ENCODE measurements at regions of chr2 and their contacts with region 1.

Region 1: DNA sequence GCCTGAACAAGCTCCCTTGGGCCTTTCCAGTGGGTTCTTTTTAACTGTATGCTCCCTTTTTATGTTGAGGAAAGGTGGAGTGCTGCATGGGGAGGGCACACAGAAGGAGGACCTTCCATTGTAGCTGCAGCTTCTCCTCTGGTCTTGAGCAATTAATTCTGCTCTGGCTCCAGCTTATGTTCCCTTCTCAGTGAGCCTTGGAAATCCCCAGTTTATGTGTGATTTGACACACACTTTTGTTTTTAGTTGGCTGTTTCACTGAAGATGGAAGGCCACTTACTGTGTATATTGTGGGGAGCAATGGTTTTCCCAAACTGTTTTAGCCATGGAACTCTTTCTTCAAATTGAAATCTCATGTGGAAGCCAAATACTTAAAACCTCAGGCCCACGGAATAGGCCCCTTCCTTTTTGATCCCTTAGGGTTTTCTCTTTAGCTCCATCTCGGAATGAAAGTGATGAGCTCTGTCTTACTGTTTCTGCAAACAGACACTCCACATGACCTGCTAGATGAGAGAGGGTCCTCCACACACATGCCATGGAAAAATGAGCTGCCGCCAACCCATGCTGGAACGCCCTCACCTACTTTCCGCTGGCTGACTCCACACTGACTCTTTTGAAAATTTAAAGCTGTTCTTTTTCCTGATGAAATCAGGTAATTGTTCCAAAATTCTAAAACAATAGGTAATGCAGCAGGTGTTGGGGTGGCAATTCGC is 280.9 kb upstream of the SIX2 start:
- DNase-seq: peak; percentile 40
- ATAC-seq: peak; percentile 91
- H3K4me3 ChIP-seq: no peak overlapping the region
- H3K27ac ChIP-seq: peak overlapping the region; percentile 27
- H3K4me1 ChIP-seq: peaks cover 9% of the 10 kb centered on the region
- H3K27me3 ChIP-seq: no peaks in the 10 kb centered on the region; a peak in 1 of 4 replicates
- CTCF ChIP-seq: no peak
- EP300 ChIP-seq: peak in 1 of 2 experiments; percentile 43; a peak in 1 of 4 replicates
- POLR2A ChIP-seq: no peak
- RAD21 ChIP-seq: no peak

Region 2: GRCh38 chr2:45237850-45238542 is 52.2 kb before region 1 on chr2:
- CTCF ChIA-PET with region 1: no interaction called
- POLR2A ChIA-PET with region 1: no interaction called
- RAD21 ChIA-PET with region 1: no interaction called
- SMC1A ChIA-PET with region 1: no interaction called
- in situ Hi-C with region 1: loop called (anchors 5 kb)
- intact Hi-C with region 1: no loop called
- DNase-seq: no peak
- ATAC-seq: no peak
- H3K4me3 ChIP-seq: no peak overlapping the region
- H3K27ac ChIP-seq: no peak overlapping the region
- H3K4me1 ChIP-seq: no peaks in the 10 kb centered on the region
- H3K27me3 ChIP-seq: no peaks in the 10 kb centered on the region
- CTCF ChIP-seq: no peak
- EP300 ChIP-seq: no peak
- POLR2A ChIP-seq: no peak
- RAD21 ChIP-seq: no peak

Measured in GM12878 (cell line).